CD8-positive, alpha-beta T cell (primary cell): ENCODE measurements at regions of chr2 and their contacts with region 1.

Region 1: GRCh38 chr2:57740891-57741290 is 305.7 kb upstream of the VRK2 start:
- DNase-seq: no peak
- ATAC-seq: no peak
- H3K4me3 ChIP-seq: no peak overlapping the region
- H3K4me3 Mint-ChIP-seq: no peak overlapping the region
- H3K27ac ChIP-seq: no peak overlapping the region
- H3K27ac Mint-ChIP-seq: no peak overlapping the region
- H3K4me1 ChIP-seq: no peaks in the 10 kb centered on the region
- H3K4me1 Mint-ChIP-seq: no peaks in the 10 kb centered on the region
- H3K27me3 ChIP-seq: no peaks in the 10 kb centered on the region
- H3K27me3 Mint-ChIP-seq: no peaks in the 10 kb centered on the region
- CTCF ChIP-seq: no peak

Region 2: DNA sequence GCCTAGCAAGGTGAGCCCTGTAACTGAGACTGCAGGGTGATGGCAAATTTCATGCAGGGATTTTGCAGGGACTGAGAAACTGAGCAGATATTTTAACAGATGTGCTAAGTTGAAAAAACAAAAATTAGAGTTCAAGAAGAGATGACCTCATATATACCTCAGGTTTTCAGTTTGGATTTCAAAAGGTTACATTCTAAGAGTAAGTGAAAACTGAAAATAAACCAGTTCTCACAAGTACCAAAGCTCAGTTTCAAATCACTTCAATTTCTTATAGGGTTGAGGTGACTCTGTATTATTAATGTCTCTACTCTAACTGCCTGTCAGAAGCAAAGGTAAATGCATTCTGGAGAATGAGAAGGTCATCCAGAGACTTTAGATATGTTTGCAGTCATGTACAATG is 68.3 kb after region 1 on chr2:
- CTCF ChIA-PET with region 1: no interaction called
- POLR2A ChIA-PET with region 1: no interaction called
- intact Hi-C with region 1: loop called in 1 of 2 experiments (anchors 1 kb)
- DNase-seq: no peak
- ATAC-seq: no peak
- H3K4me3 ChIP-seq: no peak overlapping the region
- H3K4me3 Mint-ChIP-seq: no peak overlapping the region
- H3K27ac ChIP-seq: no peak overlapping the region
- H3K27ac Mint-ChIP-seq: no peak overlapping the region
- H3K4me1 ChIP-seq: no peaks in the 10 kb centered on the region
- H3K4me1 Mint-ChIP-seq: no peaks in the 10 kb centered on the region
- H3K27me3 ChIP-seq: no peaks in the 10 kb centered on the region
- H3K27me3 Mint-ChIP-seq: no peaks in the 10 kb centered on the region
- CTCF ChIP-seq: no peak